ENCODE measurements at regions of chr20 and their contacts with region 1.

Region 1: DNA sequence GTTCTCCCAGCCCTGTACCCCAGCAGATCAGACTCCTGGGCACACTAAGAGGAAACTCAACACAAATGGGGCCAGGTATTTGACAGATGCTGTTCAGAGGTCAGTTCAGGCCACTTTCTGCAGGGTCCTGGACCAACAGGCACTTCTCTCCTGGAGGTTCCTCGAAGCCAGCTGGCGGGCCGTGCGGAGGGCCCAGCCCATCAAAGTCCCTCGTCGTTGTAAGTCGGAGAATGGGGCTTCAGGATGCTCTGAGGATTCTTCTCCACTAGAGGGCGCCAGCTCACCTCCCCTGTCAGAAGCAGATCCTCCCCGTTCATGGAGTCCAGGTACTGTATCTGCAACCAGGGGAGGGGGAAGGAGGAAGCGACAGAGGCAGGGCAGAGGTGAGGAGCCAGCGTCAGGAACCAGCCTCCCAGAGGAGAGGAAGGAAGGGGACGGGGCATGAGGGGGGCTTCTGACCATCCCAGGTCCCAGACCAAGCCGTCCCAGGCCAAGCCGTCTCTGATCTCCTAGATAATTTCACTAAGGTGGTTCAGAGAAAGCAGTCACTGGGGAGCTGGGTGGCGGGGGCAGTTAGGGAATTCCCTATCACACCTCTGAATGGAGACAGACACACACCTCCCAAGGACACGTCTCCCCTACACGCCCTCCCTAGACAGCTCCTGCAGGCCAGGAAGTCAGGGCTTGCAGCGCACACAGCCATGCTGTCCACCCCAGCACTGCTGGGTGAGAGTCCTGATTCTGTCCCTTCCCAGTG is 11.7 kb upstream of the FAM83C start:
- DNase-seq: peak; percentile 55 to 76
- ATAC-seq: peak; percentile 42 to 74 (median 66)
- H3K4me3 ChIP-seq: no peak overlapping the region
- H3K27ac ChIP-seq: no peak overlapping the region
- H3K4me1 ChIP-seq: peaks cover 3 to 45% (median 20%) of the 10 kb centered on the region in 9 donors
- H3K27me3 ChIP-seq: no peaks in the 10 kb centered on the region
- CTCF ChIP-seq: peak; percentile 89 to 96 (median 92)

Region 2: DNA sequence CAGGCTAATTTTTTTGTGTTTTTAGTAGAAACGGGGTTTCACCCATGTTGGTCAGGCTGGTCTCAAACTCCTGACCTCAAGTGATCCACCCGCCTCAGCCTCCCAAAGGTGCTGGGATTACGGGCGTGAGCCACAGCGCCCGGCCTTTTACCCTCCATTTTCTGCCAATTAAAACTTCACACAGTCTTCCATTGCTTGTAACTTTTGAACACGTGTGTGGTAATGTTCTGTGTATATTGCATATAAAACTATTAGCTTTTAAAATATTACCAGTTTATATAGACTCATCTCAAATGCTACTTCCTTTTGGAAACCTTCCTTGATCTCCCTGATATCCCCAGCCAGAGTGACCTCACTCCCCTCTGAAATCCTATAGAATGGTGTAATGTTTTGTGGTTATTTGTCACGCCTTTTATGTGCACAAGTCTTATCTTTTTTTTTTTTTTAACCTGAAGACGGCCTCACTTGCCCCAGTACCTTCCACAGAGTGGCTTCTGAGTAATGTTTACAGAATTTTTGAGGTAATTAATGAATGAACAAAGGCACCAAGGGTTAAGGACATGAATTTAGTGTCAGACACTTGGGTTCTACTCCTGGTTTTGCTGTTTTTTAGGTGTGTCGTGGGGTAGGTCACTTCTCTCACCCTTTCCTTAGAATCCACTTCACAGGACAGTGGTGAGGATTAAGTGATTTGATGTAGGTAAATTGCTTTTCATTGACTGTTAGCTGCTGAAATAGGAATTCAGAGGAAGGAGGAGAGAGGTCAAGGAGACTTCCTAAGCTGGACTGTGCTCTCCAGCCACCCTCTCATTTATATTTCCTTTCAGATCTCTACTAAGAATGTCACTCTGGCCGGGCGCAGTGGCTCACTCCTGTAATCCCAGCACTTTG is 88.6 kb before region 1 on chr20:
- intact Hi-C with region 1: no loop called
- DNase-seq: no peak
- ATAC-seq: no peak
- H3K4me3 ChIP-seq: no peak overlapping the region
- H3K27ac ChIP-seq: no peak overlapping the region
- H3K4me1 ChIP-seq: no peaks in the 10 kb centered on the region
- H3K27me3 ChIP-seq: no peaks in the 10 kb centered on the region
- CTCF ChIP-seq: no peak

Region 3: GRCh38 chr20:35434067-35435005 is 130.4 kb after region 1 on chr20:
- intact Hi-C with region 1: loop called in 8 of 10 experiments (anchors 2 to 5 kb)
- DNase-seq: peak; percentile 17 to 46
- ATAC-seq: peak in 7 of 8 donors; percentile 4 to 55 (median 37)
- H3K4me3 ChIP-seq: no peak overlapping the region
- H3K27ac ChIP-seq: no peak overlapping the region
- H3K4me1 ChIP-seq: peaks cover 0 to 14% (median 5%) of the 10 kb centered on the region in 9 donors
- H3K27me3 ChIP-seq: no peaks in the 10 kb centered on the region
- CTCF ChIP-seq: no peak

Region 4: GRCh38 chr20:35447082-35447789 is 143.3 kb after region 1 on chr20:
- intact Hi-C with region 1: loop called in 6 of 10 experiments (anchors 2 to 5 kb)
- DNase-seq: peak; percentile 86 to 88
- ATAC-seq: peak; percentile 60 to 91 (median 86)
- H3K4me3 ChIP-seq: peak overlapping the region in 8 of 10 donors; percentile 30 to 47 (median 43)
- H3K27ac ChIP-seq: no peak overlapping the region
- H3K4me1 ChIP-seq: peaks cover 0 to 5% (median 0%) of the 10 kb centered on the region in 9 donors
- H3K27me3 ChIP-seq: peaks cover 0 to 7% (median 0%) of the 10 kb centered on the region in 7 donors
- CTCF ChIP-seq: peak; percentile 88 to 97 (median 94)

Measured in heart right ventricle (tissue), 16 donors.